Right ventricle myocardium inferior (tissue), 1 donor: ENCODE measurements at regions of chr1 and their contacts with region 1.

Region 1: GRCh38 chr1:26035959-26036755 is 9.8 kb downstream of the SLC30A2 start:
- DNase-seq: peak; percentile 95
- ATAC-seq: peak; percentile 89

Region 2: GRCh38 chr1:25786887-25787759 is 249.0 kb before region 1 on chr1:
- intact Hi-C with region 1: no loop called
- DNase-seq: no peak
- ATAC-seq: no peak

Region 3: DNA sequence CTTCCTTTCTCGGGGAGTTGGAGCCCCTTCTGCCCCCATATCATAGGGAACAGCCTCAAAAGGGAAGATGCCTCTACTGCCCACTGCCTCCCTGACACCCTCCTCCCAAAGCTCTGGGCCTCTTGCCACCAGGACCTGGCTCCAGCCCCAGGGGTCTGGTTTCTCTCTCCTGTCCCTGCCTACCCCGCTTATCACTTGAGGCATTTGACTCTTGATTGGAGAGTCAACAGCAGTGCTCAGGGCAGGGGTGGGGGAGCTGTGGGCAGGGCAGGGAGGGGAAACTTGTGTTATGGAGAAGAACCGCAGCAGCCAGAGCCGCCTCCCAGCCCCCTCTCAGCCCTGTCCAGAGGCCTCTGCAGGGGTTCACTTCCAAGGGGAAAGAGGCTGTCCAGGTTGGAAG is 30.7 kb after region 1 on chr1:
- intact Hi-C with region 1: loop called (anchors 2 kb)
- DNase-seq: peak; percentile 78
- ATAC-seq: peak; percentile 90

Region 4: DNA sequence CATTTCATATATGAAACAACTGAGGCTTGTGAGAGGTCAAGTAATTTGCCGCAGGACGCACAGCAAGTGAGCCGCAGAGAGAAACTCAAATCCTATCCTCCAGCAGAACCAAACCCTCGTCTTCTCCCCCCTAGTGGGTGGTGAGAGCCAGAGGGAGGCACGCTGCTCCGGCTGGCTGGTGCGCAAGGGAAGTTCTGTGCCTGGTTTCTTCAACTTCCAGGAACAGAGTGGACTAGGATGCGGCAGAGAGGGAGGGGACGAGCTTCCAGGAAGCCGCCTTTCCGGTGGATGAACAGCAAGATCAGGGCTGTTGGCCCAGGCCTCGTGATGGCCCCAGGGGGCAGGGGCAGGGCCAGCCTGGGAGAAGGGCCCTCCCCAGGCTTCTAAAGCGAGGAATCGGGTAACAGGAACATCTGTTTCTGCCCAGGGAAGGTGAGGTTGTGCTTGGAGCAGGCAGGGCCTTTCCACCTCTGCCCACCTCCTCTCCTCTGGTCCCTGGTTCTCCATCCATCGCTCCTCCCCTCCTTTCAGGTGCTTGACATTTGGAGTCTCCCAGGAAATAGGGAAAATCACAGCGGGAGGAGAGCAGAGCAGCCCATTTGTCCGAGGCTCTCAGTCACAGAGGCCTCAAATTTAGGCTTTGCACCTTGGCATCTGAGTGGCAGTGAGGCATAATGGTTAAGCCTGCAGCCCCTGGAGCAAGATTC is 58.7 kb after region 1 on chr1:
- intact Hi-C with region 1: loop called (anchors 1 kb)
- DNase-seq: no peak
- ATAC-seq: peak; percentile 67

Region 5: DNA sequence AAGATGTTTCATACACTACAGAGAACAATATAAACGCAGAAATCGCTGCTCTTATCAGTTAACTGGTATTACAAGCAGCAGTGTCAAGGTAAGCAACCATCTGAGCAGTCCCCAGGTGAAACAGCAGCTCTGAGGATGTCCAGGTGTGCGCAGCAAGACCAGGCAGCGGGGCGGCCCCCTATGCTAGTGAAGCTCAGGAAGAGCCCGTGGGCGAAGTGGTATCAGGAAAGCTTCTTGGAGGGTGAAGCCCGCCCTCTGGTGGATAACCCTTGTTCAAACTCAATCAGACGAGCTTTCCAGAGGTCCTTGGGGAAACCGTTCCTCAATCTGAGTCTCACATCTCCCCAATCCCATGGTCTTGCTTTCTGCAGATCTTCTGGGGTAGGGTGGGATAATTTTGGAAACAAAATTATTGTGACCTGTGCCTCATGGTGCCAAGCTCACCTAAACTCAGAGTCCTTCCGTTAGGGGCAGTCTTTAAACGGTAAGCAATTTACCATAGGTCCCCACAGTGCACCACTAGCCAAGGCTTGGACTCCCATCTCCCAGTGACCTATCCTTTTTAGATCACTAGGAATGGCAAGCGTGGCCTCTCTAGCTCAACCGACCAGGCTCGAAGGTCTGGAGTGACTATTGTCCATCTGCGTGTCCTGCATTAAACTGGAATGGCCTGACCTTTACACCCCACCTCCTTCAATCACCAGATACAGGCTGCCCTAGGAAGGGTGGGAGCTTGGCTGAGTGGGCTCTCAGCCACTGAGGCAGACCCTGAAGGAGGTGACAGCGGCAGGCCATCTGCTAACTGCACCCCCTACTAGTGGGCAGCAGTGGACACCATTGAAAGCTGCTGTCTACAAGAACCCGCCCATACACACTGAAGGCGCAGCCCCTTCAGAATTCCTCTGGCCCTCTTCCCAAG is 109.1 kb after region 1 on chr1:
- intact Hi-C with region 1: loop called (anchors 1 kb)
- DNase-seq: peak; percentile 80
- ATAC-seq: peak; percentile 85

Region 6: GRCh38 chr1:26158908-26159511 is 122.9 kb after region 1 on chr1 and contains the start of gene FAM110D:
- intact Hi-C with region 1: loop called (anchors 2 kb)
- DNase-seq: no peak
- ATAC-seq: peak; percentile 74
- total RNA-seq, gene FAM110D: 4.0 TPM